Activated CD4-positive, alpha-beta T cell treated with anti-CD3 and anti-CD28 coated beads, Interleukin-2, amount 10 ng/mL, durations not matched to agents 24 days and 14 days (primary cell): ENCODE measurements at regions of chr19 and their contacts with region 1.

Region 1: DNA sequence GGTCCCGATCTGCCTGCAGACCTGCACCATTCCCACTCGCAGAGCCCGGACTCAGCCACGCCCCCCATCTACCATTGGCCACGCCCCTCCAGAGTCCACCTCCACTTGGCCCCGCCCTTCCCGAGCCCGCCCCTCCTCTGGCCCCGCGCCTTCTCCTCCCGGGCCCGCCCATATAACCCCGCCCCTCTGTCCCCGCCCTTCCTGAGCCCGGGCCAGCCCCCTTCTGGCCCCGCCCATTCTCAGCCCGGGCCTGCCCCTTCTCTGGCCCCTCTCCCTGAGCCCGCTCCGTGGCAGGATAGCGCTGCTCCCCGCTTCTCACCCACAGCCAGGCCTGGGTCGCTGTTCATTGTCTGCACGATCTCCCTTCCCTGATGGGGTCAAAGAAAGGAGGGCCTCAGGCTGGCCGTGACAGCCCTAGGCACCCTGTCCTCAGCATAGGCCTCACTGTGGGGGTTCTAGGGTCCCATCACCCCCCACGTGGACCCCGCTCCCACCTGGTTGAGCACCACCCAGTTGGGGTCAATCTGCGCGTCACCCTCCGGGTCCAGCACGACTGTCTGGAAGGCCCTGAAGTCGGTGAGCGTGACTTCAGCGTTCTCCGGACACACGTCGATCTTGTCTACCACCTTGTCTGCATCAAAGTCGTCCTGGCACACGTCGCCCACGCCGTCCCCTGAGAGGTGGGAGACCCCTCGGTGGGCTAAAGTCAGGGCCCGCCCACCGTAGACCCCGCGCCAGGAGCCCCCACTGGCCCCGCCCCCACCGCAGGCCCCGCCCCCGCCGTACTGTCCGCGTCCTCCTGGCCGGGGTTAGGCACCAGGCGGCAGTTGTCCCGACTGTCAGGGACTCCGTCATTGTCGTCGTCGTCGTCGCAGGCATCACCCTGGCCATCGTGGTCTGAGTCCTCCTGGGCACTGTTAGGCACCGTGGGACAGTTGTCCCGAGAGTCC is 5.7 kb downstream of the COMP start:
- DNase-seq: peak; percentile 86
- H3K4me3 Mint-ChIP-seq: peak overlapping the region; percentile 39
- H3K27ac Mint-ChIP-seq: no peak overlapping the region
- H3K4me1 Mint-ChIP-seq: peaks cover 12% of the 10 kb centered on the region
- H3K27me3 Mint-ChIP-seq: peaks cover 48% of the 10 kb centered on the region

Region 2: DNA sequence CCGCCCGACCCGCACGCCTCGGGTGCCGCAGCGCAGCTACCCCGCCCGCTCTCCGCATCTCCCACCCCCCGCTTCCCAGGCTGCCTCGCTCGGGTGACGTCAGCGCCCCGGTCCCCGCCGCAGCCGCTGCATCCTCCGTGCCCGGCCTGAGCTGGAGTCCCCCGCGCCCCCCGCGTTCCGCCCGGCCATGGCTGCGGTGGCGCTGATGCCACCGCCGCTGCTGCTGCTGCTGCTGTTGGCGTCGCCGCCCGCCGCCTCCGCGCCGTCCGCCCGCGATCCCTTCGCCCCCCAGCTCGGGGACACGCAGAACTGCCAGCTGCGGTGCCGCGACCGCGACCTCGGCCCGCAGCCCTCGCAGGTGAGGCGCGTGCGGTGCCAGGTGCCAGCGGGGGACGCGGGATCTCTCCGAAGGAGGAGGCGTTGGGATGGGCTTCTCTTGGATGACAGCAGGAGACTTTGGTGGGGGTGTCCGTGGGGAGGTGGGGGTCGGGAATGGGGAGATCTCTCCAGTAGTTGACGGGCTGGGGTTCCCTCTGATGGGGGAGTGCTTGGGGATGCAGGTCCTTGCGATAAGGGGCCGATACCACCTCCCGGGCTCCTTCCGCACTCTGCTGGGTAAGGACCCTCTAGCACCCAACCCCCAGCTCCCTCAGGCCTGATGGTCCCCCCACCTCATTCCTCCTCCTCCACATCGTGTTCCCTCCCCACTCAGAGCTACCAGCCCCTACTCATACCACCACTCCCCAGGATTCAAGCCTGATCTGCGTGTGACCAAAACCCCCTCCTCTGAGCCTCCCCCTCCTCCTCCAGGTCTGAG is 172.5 kb before region 1 on chr19 and contains the start of gene TMEM59L:
- intact Hi-C with region 1: loop called (anchors 5 kb)
- DNase-seq: peak; percentile 85
- H3K4me3 Mint-ChIP-seq: peak within 1 kb of the TSS; percentile 75
- H3K27ac Mint-ChIP-seq: no peak within 1 kb of the TSS
- H3K4me1 Mint-ChIP-seq: peaks cover 9% of the 10 kb centered on the region
- H3K27me3 Mint-ChIP-seq: peaks cover 71% of the 10 kb centered on the region
- total RNA-seq, gene TMEM59L: not detected in 2 replicates

Region 3: GRCh38 chr19:18795540-18795939 is 10.1 kb after region 1 on chr19:
- intact Hi-C with region 1: no loop called
- DNase-seq: no peak
- H3K4me3 Mint-ChIP-seq: no peak overlapping the region
- H3K27ac Mint-ChIP-seq: no peak overlapping the region
- H3K4me1 Mint-ChIP-seq: no peaks in the 10 kb centered on the region
- H3K27me3 Mint-ChIP-seq: peaks cover 45% of the 10 kb centered on the region

Region 4: DNA sequence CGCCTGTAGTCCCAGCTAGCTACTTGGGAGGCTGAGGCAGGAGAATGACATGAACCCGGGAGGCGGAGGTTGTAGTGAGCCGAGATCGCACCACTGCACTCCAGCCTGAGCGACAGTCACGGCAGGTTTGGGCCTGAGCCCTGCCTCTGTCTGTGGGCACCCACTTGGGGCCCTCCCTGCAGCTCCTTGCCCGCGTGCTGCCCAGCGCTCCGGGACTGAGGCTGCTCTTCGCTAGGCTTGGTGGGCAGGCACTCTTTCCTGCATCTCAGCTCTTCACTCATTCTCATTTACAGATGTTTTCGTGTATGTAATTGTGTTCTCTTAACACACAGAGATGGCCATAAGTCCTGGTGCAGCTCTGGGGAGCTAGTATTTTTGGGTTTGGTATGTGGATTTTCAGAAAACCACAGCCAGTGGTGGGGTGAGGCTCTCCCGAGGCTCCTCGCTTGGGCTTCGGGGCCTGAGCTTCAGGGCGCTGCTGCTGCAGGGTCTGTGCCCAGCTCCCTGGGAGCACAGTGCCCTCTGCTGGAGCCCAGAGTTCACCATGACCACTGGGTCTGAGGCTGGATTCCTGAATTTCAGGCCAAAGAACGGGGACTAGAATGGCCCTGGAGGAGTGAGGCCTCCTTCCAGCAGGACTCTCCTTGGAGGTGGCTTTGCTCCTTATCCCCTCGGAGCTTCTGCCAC is 61.6 kb after region 1 on chr19:
- intact Hi-C with region 1: loop called (anchors 10 kb)
- DNase-seq: peak; percentile 89
- H3K4me3 Mint-ChIP-seq: no peak overlapping the region
- H3K27ac Mint-ChIP-seq: peak overlapping the region; percentile 69
- H3K4me1 Mint-ChIP-seq: peaks cover 48% of the 10 kb centered on the region
- H3K27me3 Mint-ChIP-seq: no peaks in the 10 kb centered on the region

Region 5: DNA sequence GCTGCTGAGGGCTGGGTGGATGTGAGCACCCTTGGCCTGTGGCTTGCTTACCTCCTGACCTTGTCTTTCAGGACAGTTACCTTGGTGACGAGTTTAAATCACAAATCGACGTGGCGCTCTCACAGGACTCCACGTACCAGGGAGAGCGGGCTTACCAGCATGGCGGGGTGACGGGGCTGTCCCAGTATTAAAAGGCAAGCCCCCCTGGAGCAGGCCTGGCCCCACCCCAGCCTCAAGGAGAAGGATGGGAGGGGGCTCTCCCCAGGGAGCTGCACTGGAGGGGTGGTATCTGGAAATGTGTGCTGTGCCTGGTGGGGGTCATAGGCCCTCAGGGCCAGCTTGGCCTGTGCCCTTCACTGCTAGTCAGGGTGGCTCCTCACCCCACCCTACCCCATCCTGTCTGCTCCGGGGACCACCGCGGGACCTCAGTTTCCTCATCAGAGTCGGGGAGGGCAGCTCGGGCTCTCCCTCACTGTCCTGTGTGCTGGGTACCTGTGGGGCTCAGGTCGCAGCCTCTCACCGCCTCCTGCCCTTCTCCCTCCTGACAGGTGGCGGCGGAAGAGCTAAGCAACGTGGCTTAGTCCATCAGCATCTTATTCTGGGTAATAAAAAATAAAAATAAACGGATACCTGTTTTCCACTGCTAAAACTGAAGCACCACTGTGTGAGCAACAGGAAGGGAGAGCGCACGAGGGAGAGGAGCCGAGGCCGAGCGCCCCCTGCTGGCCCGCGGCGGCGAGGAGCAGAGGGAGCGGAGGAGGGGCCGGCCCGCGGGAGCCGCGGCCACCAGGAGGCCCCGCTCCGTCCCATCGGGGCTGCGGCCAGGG is 80.7 kb after region 1 on chr19:
- intact Hi-C with region 1: loop called (anchors 10 kb)
- DNase-seq: peak; percentile 89
- H3K4me3 Mint-ChIP-seq: no peak overlapping the region
- H3K27ac Mint-ChIP-seq: no peak overlapping the region
- H3K4me1 Mint-ChIP-seq: peaks cover 2% of the 10 kb centered on the region
- H3K27me3 Mint-ChIP-seq: peaks cover 3% of the 10 kb centered on the region

Region 6: GRCh38 chr19:18931316-18932162 is 146.1 kb after region 1 on chr19:
- intact Hi-C with region 1: no loop called
- DNase-seq: no peak
- H3K4me3 Mint-ChIP-seq: no peak overlapping the region
- H3K27ac Mint-ChIP-seq: no peak overlapping the region
- H3K4me1 Mint-ChIP-seq: peaks cover 5% of the 10 kb centered on the region
- H3K27me3 Mint-ChIP-seq: peaks cover 13% of the 10 kb centered on the region